WTC11 (cell line): ENCODE measurements at regions of chrX and their contacts with region 1.

Region 1: GRCh38 chrX:16666541-16666940 is 16.6 kb downstream of the S100G start:
- DNase-seq: no peak
- ATAC-seq: no peak
- H3K4me3 Mint-ChIP-seq: no peak overlapping the region
- H3K27ac Mint-ChIP-seq: peak overlapping the region; percentile 53; the same call in 1 of the 2 replicates
- H3K4me1 Mint-ChIP-seq: peaks cover 36% of the 10 kb centered on the region
- H3K27me3 Mint-ChIP-seq: no peaks in the 10 kb centered on the region
- CTCF ChIP-seq: no peak

Region 2: DNA sequence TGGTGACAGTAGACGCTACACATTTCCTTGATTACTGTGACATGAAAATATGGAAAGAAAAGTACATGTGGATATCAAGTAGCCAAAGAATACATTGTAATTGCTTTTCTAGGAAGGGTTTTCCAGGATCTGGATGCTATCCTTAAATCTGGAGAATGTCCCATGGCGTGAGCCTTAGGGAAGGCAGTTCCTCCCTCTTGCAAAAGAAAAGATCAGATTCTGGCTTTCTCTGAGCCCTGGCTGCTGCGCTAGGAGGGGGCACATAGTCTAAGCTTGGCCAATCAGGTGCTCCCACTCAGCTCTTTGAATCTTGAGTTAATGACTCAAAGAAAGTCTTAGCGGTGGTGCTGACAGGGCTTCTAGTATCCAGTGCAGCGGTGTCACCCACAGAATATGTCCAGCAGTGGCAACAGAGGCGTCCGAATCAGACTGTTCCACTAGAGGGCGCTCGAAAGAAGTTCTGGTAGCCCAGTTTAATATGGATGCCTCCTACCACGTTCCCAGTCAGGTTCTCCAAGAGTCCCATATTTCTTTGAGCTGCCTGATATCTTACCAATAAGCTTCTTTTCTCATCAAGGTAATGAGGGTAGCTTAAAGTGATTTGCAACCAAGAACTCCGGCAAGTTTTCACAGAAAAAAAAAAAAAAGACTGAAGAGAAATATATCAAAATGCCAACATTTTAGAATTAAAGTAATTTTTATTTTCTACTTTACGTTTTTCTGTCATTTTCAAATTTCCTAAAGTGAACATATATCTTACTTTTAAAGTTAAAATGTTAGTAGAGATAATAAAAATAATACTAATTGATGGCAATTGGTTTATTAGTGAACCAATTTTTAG is 230.0 kb before region 1 on chrX:
- CTCF ChIA-PET with region 1: interaction called, 12 read pairs
- POLR2A ChIA-PET with region 1: no interaction called
- DNase-seq: peak; percentile 73
- ATAC-seq: peak; percentile 82
- H3K4me3 Mint-ChIP-seq: no peak overlapping the region
- H3K27ac Mint-ChIP-seq: no peak overlapping the region
- H3K4me1 Mint-ChIP-seq: peaks cover 15% of the 10 kb centered on the region
- H3K27me3 Mint-ChIP-seq: no peaks in the 10 kb centered on the region
- CTCF ChIP-seq: peak; percentile 48

Region 3: GRCh38 chrX:16445166-16445752 is 221.3 kb before region 1 on chrX:
- CTCF ChIA-PET with region 1: interaction called, 10 read pairs
- POLR2A ChIA-PET with region 1: no interaction called
- DNase-seq: peak; percentile 27
- ATAC-seq: peak; percentile 78
- H3K4me3 Mint-ChIP-seq: no peak overlapping the region
- H3K27ac Mint-ChIP-seq: no peak overlapping the region
- H3K4me1 Mint-ChIP-seq: peaks cover 32% of the 10 kb centered on the region
- H3K27me3 Mint-ChIP-seq: peaks cover 8% of the 10 kb centered on the region; the same call in 1 of the 2 replicates
- CTCF ChIP-seq: peak; percentile 49; the same call in 1 of the 2 replicates